ENCODE measurements at regions of chr15 and their contacts with region 1.

Region 1: DNA sequence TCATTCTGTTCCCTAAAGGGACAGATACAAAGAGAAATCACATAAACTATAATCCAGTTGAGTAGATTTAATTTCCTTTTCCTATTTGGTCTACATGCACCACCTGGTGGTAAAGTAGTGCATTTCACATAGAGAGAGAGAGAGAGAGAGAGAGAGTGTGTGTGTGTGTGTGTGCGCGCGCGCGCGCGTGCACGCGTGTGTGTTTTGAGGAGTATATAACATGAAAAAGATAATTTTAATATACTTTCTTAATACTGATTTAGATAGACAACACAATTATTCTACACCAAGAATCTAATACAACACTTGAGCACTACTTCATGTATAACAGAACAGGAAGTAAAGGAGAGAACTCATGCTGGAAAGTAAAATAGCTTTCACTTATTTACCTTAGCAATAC is 1.1 kb upstream of the FGF7 start:
- DNase-seq: peak; percentile 81
- ATAC-seq: peak; percentile 50
- H3K4me3 ChIP-seq: no peak overlapping the region
- H3K27ac ChIP-seq: peak overlapping the region; percentile 69; the same call in 1 of the 2 replicates
- H3K4me1 ChIP-seq: no peaks in the 10 kb centered on the region; the same call in 1 of the 2 replicates
- H3K27me3 ChIP-seq: no peaks in the 10 kb centered on the region
- CTCF ChIP-seq: peak; percentile 90
- POLR2A ChIP-seq: no peak
- RAD21 ChIP-seq: peak; percentile 82

Region 2: GRCh38 chr15:48722764-48723661 is 699.0 kb before region 1 on chr15:
- CTCF ChIA-PET with region 1: no interaction called
- POLR2A ChIA-PET with region 1: no interaction called
- dilution Hi-C with region 1: no loop called
- in situ Hi-C with region 1: no loop called
- intact Hi-C with region 1: loop called (anchors 5 kb)
- DNase-seq: peak; percentile 94
- ATAC-seq: peak; percentile 91
- H3K4me3 ChIP-seq: no peak overlapping the region
- H3K27ac ChIP-seq: peak overlapping the region; percentile 16
- H3K4me1 ChIP-seq: peaks cover 17% of the 10 kb centered on the region
- H3K27me3 ChIP-seq: no peaks in the 10 kb centered on the region
- CTCF ChIP-seq: no peak
- POLR2A ChIP-seq: no peak
- RAD21 ChIP-seq: no peak

Region 3: GRCh38 chr15:49155110-49155833 is 266.7 kb before region 1 on chr15 and contains the start of gene COPS2:
- CTCF ChIA-PET with region 1: no interaction called
- POLR2A ChIA-PET with region 1: no interaction called
- dilution Hi-C with region 1: no loop called
- in situ Hi-C with region 1: no loop called
- intact Hi-C with region 1: loop called (anchors 2 kb)
- DNase-seq: peak; percentile 99
- ATAC-seq: peak; percentile 97
- H3K4me3 ChIP-seq: peak within 1 kb of the TSS; percentile 70
- H3K27ac ChIP-seq: peak within 1 kb of the TSS; percentile 78
- H3K4me1 ChIP-seq: no peaks in the 10 kb centered on the region
- H3K27me3 ChIP-seq: no peaks in the 10 kb centered on the region
- CTCF ChIP-seq: no peak
- POLR2A ChIP-seq: peak; percentile 86
- RAD21 ChIP-seq: no peak
- total RNA-seq, gene COPS2: 75.6 and 103 TPM in 2 replicates

Region 4: DNA sequence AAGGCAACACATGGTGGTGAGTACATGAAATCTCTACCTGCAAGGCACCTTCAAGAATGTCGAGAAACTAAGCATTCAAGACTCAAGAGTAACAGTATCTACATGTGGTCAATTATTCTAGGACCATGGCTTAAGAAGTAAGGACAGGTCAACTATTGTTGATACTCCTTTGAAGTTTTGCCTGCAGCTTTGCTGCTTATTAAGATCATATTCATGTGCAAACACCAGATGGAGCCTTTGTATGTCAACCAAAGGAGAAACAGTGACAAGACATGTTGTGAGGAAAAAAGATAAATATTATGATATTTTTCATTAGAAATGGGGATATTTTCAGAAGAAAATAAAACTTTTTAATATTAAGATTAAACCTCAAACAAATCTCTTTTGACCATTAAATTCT is 51.2 kb before region 1 on chr15:
- CTCF ChIA-PET with region 1: no interaction called
- POLR2A ChIA-PET with region 1: no interaction called
- dilution Hi-C with region 1: no loop called
- in situ Hi-C with region 1: no loop called
- intact Hi-C with region 1: loop called (anchors 2 kb)
- DNase-seq: peak; percentile 39
- ATAC-seq: no peak
- H3K4me3 ChIP-seq: no peak overlapping the region
- H3K27ac ChIP-seq: no peak overlapping the region
- H3K4me1 ChIP-seq: no peaks in the 10 kb centered on the region
- H3K27me3 ChIP-seq: no peaks in the 10 kb centered on the region
- CTCF ChIP-seq: peak; percentile 31; the same call in 1 of the 2 replicates
- POLR2A ChIP-seq: no peak
- RAD21 ChIP-seq: peak; percentile 40

Region 5: DNA sequence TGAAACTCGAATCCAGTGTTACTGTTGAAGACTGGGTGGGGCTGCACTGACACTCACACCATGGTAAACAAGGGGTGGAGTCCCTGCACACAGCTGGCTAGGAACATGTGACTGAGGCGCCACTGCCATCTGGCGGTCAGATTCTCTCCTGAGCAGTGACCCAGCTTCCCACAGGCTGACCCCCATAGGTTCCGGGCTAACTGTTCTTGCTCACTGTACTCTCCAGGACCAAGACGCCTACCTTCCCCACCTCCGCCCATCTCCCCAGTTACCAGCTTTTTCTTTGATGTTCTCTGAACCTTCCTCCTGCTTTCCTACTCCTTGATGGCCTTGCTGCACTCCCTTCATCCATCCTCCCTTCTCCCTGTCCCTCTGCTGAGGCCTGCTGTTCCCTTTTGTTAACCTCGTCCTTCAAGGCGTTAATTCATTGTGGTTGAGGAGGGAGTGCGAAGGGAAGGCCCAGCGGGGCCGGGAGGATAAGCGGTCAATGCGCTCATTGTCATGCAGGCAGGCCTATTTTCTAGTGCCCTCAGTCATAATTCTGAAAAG is 581.9 kb after region 1 on chr15:
- CTCF ChIA-PET with region 1: interaction called, 5 read pairs
- POLR2A ChIA-PET with region 1: no interaction called
- dilution Hi-C with region 1: no loop called
- in situ Hi-C with region 1: loop called (anchors 10 kb)
- intact Hi-C with region 1: loop called (anchors 1 kb)
- DNase-seq: peak; percentile 87
- ATAC-seq: peak; percentile 98
- H3K4me3 ChIP-seq: no peak overlapping the region
- H3K27ac ChIP-seq: peak overlapping the region; percentile 70
- H3K4me1 ChIP-seq: peaks cover 11% of the 10 kb centered on the region
- H3K27me3 ChIP-seq: no peaks in the 10 kb centered on the region
- CTCF ChIP-seq: peak; percentile 88
- POLR2A ChIP-seq: no peak
- RAD21 ChIP-seq: peak; percentile 87

Region 6: DNA sequence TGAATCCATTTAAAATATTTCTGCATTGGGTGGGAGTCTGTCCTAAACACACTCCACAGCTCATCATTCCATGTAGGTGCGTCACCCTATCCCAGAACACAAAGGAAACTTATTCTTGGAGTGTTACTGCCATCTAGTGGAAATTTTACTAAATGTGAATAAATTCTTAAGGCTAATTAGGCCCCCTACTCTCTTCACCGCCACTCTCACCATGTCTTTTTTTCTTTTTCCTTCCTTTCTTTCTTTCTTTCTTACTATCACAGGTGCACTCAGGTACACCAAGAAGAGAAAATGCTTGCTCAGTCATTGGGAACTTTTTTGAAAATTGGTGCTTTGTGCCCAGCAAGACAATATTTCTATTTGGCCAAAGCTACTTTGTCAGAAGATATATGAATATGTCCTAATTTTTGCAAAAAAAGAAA is 723.5 kb after region 1 on chr15:
- CTCF ChIA-PET with region 1: interaction called, 4 read pairs
- POLR2A ChIA-PET with region 1: no interaction called
- dilution Hi-C with region 1: no loop called
- in situ Hi-C with region 1: loop called (anchors 10 kb)
- intact Hi-C with region 1: no loop called
- DNase-seq: peak; percentile 88
- ATAC-seq: peak; percentile 86
- H3K4me3 ChIP-seq: no peak overlapping the region
- H3K27ac ChIP-seq: peak overlapping the region; percentile 44
- H3K4me1 ChIP-seq: no peaks in the 10 kb centered on the region; the same call in 1 of the 2 replicates
- H3K27me3 ChIP-seq: no peaks in the 10 kb centered on the region
- CTCF ChIP-seq: peak; percentile 60
- POLR2A ChIP-seq: no peak
- RAD21 ChIP-seq: peak; percentile 83

Measured in IMR-90 (cell line).